Ovary (tissue), 10 donors: ENCODE measurements at regions of chr20 and their contacts with region 1.

Region 1: DNA sequence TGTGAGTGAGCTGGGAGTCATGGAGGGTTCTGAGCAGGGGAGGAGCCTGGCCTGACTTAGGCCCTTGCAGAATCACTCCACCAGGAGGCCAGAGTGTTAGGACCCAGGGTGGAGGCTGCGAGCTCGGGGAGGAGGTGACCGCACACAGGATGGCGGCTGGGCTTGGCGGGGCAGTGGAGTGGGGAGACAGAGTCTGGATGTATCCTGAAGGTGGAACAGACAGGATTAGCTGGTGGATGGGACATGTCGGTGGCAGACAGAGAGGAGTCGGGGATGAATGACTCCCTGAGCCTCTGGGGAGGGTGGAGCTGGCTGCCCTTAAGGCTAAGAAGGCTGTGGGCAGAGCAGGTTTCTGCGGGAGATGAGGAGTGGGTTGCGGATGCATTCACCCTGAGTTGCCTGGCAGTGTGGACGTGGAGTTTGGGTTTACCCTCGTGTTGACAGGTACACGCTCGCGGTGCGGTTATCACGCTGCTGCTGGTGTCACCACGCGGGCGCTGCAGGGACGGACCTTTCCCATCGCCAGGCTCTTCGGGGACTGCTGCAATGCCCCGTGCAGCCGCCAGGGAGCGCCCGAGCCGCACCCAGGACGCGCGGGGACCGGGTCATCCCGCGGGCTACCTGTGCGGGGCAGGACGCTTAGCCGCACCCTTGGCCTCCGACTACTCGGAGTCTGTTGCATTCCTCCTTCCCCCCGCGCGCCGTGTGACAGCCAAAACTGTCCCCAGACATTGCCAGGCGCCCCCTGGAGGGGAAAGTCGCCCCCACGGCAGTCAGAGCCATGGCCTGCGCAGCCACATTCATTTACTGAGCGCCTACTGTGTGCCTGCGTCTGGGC is 43.0 kb upstream of the PTGIS start:
- DNase-seq: peak; percentile 64 to 84 (median 78)
- H3K4me3 ChIP-seq: no peak overlapping the region
- H3K27ac ChIP-seq: no peak overlapping the region
- H3K4me1 ChIP-seq: peaks cover 5% of the 10 kb centered on the region
- H3K27me3 ChIP-seq: no peaks in the 10 kb centered on the region
- CTCF ChIP-seq: peak; percentile 98 to 99 (median 99)
- EP300 ChIP-seq: no peak
- POLR2A ChIP-seq: peak; percentile 30

Region 2: GRCh38 chr20:49338061-49338460 is 272.9 kb before region 1 on chr20:
- intact Hi-C with region 1: loop called (anchors 5 to 10 kb)
- DNase-seq: no peak
- H3K4me3 ChIP-seq: no peak overlapping the region
- H3K27ac ChIP-seq: no peak overlapping the region
- H3K4me1 ChIP-seq: no peaks in the 10 kb centered on the region
- H3K27me3 ChIP-seq: no peaks in the 10 kb centered on the region
- CTCF ChIP-seq: no peak
- EP300 ChIP-seq: no peak
- POLR2A ChIP-seq: no peak

Region 3: DNA sequence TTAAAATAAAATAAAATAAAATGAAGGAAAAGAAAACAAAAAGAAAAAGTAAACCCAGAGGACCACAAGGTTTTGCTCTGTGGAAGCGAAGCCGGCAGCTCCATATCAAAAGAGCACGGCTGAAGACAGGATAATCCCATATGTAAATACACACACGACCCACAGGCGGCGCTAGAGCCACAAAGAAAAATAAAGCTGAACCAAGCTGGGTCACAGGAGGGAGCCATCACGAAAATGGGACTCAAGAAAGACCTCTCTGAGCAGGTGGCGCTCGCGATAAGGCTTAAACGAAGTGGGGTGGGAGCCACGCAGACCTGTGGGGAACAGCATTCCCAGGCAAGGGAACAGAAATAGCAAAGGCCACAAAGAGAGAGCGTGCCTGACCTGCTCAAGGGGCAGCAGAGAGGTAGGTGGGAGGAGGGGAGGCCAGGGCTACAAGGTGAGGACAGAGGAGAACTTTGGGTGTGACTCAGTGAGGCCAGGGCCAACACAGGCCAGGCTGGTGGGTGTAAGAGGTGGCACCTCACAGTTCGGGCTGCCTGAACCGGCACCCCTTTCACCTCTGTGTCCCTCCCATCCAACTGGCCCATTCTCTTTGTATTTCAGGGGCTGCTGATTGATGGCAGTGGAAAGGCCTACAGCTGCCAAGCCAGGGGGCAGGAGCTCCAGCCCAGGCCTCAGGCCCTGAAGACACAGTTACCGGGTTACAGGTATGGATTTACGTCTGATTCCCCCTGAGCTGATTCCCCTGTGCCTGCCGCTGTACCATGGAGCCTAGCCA is 69.0 kb before region 1 on chr20:
- intact Hi-C with region 1: loop called in 3 of 4 experiments (anchors 1 to 2 kb)
- DNase-seq: peak; percentile 71 to 84 (median 78)
- H3K4me3 ChIP-seq: no peak overlapping the region
- H3K27ac ChIP-seq: no peak overlapping the region
- H3K4me1 ChIP-seq: no peaks in the 10 kb centered on the region
- H3K27me3 ChIP-seq: no peaks in the 10 kb centered on the region
- CTCF ChIP-seq: peak; percentile 56 to 97 (median 93)
- EP300 ChIP-seq: no peak
- POLR2A ChIP-seq: peak; percentile 29

Region 4: GRCh38 chr20:49888345-49888966 is 277.5 kb after region 1 on chr20:
- intact Hi-C with region 1: loop called in 2 of 4 experiments (anchors 5 to 10 kb)
- DNase-seq: peak in 4 of 5 donors; percentile 53 to 73 (median 64)
- H3K4me3 ChIP-seq: no peak overlapping the region
- H3K27ac ChIP-seq: peak overlapping the region in 1 of 2 donors; percentile 70
- H3K4me1 ChIP-seq: peaks cover 26% of the 10 kb centered on the region
- H3K27me3 ChIP-seq: no peaks in the 10 kb centered on the region
- CTCF ChIP-seq: peak in 2 of 3 donors; percentile 34 to 36
- EP300 ChIP-seq: no peak
- POLR2A ChIP-seq: no peak

Region 5: DNA sequence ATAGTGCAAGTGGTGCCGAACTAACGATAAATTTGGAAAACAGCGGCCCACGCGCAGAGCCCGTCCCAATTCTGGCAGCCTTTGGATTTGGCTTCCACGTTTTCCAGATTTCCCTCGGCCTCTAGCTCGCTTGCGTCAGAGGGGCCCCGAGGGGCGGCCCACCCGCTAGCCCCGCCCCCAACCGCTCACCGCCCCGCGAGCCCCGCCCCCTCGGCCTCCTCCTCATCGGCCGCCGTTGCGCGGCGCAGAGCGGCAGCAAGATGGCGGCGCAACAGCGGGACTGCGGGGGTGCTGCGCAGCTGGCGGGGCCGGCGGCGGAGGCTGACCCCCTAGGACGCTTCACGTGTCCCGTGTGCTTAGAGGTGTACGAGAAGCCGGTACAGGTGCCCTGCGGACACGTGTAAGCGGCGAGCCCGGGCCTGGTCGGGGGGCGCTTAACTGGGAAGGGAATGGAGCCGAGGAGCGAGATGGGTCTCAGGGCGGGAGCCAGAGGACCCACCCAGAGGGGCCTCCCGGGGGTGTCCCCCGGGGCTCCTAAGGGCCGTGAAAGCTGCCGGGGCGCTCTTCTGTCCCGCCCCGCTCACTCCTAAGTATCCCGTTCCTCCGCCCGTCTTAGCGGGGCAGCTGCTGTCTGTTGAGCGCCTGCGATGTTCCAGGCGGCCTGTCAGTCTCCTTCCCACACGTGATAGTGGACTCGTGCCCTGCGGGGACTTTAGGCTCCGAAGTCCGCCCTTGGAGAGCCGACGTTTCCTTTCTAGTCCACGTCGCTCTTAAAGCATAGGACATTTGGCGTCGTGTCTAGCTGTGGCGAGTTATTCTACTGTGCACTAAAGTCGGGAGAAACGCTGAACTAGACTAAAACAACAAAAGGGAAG is 325.5 kb after region 1 on chr20 and contains the start of gene RNF114:
- intact Hi-C with region 1: loop called in 1 of 4 experiments (anchors 10 kb)
- DNase-seq: peak; percentile 89 to 96 (median 94)
- H3K4me3 ChIP-seq: peak within 1 kb of the TSS; percentile 89
- H3K27ac ChIP-seq: peak within 1 kb of the TSS; percentile 75 to 80
- H3K4me1 ChIP-seq: peaks cover 19% of the 10 kb centered on the region
- H3K27me3 ChIP-seq: no peaks in the 10 kb centered on the region
- CTCF ChIP-seq: peak in 1 of 3 donors; percentile 27
- EP300 ChIP-seq: no peak
- POLR2A ChIP-seq: peak; percentile 97
- total RNA-seq, gene RNF114: 54.0 to 186 (median 73.2) TPM

Region 6: GRCh38 chr20:50215101-50215690 is 604.3 kb after region 1 on chr20:
- intact Hi-C with region 1: no loop called
- DNase-seq: no peak
- H3K4me3 ChIP-seq: no peak overlapping the region
- H3K27ac ChIP-seq: no peak overlapping the region
- H3K4me1 ChIP-seq: no peaks in the 10 kb centered on the region
- H3K27me3 ChIP-seq: no peaks in the 10 kb centered on the region
- CTCF ChIP-seq: no peak
- EP300 ChIP-seq: no peak
- POLR2A ChIP-seq: no peak